AG04449 (cell line): ENCODE measurements at regions of chr11 and their contacts with region 1.

Region 1: DNA sequence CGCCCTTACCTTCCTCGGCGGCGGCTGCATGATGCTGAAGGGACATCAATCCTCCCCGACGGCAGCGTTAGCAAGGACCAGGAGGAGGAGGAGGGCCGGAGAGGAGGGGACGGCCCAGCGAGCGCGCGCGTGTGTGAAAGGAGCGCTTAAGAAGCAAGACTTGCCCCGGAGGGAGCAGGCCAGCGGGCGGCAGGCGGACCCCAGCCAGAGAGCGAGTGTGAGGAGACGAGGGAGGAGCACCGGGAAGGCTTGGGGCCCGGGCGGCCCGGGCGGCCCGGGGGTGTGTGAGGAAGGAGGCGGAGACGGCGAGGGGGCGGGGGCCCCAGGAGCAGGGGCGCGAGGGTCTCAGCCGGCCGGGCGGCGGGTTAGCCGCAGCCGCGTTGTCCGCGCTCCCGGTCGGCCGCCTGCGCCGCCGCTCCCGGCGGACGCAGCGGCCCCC is 251 bp downstream of the FCHSD2 start:
- DNase-seq: no peak
- H3K4me3 ChIP-seq: peak overlapping the region; percentile 94
- CTCF ChIP-seq: peak; percentile 19

Region 2: GRCh38 chr11:72840780-72841179 is 301.1 kb before region 1 on chr11:
- CTCF ChIA-PET with region 1: interaction called, 11 read pairs
- POLR2A ChIA-PET with region 1: no interaction called
- DNase-seq: peak; percentile 73
- H3K4me3 ChIP-seq: no peak overlapping the region
- CTCF ChIP-seq: no peak

Region 3: DNA sequence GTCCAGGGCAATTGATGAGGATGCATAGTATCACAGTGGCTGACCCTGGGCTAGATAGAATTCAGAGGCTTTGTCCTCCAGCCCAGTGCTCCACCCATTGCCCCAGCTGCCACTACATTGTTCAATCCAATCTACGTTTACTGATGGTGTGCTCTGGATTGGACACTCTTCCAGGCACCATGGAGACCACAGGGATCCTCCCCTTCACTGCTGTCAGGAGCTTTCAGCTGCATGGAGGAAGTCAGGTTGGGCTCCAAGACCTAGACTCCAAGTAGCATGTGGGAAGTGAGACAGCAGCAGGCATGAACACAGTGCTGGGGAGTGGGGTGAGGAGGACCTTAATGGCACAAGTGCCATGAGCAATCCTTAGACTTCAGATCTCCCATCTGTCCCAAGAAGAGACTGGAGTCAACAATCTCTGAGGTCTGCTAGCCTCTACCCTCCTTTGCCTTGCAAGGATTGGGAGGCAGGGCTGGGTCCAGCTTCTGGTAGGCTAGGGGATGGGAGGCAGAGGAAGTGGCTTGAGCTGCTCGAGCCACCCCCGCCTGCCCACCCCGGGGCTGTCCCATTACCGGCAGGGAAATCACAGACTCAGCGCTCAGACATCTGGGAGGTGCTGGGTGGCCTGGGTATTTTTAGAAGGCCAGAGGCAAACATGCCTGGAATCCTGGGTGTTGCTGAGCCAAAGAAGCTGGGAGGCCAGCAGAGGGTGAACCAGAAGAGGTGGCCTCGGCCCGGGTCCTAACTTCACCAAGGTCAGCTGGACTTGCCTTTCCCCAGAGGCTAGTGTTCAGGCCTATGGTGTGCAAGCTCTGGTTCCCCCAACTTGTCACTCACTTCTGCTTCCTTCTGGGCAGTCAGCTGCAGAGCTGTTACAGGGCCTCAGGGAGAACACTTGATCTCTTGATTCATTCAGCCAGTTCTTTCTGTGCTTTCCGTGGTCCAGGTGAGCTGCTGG is 15.5 kb after region 1 on chr11:
- CTCF ChIA-PET with region 1: interaction called, 46 read pairs
- POLR2A ChIA-PET with region 1: interaction called, 31 read pairs
- DNase-seq: peak; percentile 65
- H3K4me3 ChIP-seq: peak overlapping the region; percentile 12; the same call in 1 of the 2 replicates
- CTCF ChIP-seq: no peak

Region 4: GRCh38 chr11:73342633-73343032 is 200.8 kb after region 1 on chr11:
- CTCF ChIA-PET with region 1: no interaction called
- POLR2A ChIA-PET with region 1: no interaction called
- DNase-seq: no peak
- H3K4me3 ChIP-seq: no peak overlapping the region
- CTCF ChIP-seq: no peak